ENCODE measurements at regions of chr19 and their contacts with region 1.

Region 1: DNA sequence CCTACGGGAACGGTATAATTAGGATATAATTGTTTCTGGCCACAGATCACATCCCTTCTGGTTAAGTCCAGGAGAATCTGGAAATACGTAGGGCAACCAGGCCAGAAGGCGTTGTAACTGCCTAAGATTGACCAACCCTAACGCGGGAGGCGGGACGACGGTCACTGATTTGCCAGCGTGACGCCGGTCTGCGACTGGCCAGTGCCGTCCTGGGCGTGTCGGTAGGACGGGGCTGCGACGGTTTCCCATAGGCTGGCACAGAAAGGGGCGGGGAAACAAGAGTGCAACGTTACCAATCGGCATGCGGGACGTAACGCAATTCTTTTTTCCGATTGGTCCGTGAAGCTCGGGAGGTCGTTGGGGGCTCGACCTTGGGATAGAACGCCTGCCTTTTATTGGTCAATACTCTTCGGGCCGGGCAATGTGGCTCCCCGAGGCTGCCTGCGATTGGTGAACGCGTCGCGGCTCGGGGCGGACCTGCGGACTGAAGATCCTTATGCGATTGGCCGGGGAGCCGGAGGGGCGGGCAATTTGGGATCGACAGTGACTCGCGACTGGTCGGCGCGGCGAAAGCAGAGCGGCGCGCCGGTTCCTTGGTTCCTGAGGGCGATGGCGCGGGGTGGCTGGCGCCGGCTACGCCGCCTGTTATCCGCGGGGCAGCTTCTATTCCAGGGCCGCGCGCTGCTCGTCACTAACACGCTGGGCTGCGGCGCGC is at the start of gene MPV17L2:
- DNase-seq: peak; percentile 94 to 100 (median 98)
- ATAC-seq: peak; percentile 89
- H3K4me3 Mint-ChIP-seq: peak within 1 kb of the TSS; percentile 78 to 98 (median 90)
- H3K27ac Mint-ChIP-seq: peak within 1 kb of the TSS; percentile 79 to 99 (median 93)
- H3K4me1 Mint-ChIP-seq: peaks cover 7 to 28% (median 24%) of the 10 kb centered on the region in 4 donors
- H3K27me3 Mint-ChIP-seq: peaks cover 0 to 4% (median 0%) of the 10 kb centered on the region in 5 donors
- polyA plus RNA-seq, gene MPV17L2: 5.1 to 12.2 (median 9.4) TPM

Region 2: DNA sequence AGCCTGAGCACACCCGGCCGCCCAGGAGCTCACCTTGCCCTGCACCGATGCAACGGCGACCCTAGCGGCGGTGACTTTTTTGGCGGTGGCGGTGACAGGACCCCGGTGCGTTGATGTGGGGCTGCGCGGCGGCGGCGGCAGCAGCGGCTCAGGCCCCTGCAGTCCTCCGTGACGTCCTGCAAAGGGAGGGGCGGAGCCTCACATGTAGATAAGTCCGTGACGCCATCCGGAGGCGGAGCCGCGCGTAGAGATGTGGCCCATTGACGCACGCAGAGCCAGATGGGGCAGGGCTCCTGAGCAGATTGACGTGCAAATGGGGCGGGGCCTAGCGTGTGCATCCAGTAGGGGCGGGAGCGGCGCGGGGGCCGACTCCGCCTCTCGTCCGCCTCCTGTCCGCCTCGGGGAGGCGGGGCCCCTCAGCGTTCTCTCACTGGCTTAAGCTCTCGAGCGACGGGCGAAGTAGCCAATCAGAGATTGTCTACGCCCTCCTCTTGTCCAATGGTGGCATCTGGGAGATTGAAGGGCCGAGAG is 11.1 kb after region 1 on chr19 and contains the start of gene RAB3A:
- POLR2A ChIA-PET with region 1: interaction called, 72 read pairs
- DNase-seq: peak; percentile 95 to 100 (median 99)
- ATAC-seq: peak; percentile 86 to 87
- H3K4me3 Mint-ChIP-seq: peak within 1 kb of the TSS; percentile 92 to 98 (median 96)
- H3K27ac Mint-ChIP-seq: peak within 1 kb of the TSS; percentile 74 to 99 (median 97)
- H3K4me1 Mint-ChIP-seq: peaks cover 11 to 29% (median 27%) of the 10 kb centered on the region in 4 donors
- H3K27me3 Mint-ChIP-seq: peaks cover 0 to 6% (median 4%) of the 10 kb centered on the region in 5 donors
- polyA plus RNA-seq, gene RAB3A: 1.3 to 2.3 (median 1.8) TPM

Region 3: DNA sequence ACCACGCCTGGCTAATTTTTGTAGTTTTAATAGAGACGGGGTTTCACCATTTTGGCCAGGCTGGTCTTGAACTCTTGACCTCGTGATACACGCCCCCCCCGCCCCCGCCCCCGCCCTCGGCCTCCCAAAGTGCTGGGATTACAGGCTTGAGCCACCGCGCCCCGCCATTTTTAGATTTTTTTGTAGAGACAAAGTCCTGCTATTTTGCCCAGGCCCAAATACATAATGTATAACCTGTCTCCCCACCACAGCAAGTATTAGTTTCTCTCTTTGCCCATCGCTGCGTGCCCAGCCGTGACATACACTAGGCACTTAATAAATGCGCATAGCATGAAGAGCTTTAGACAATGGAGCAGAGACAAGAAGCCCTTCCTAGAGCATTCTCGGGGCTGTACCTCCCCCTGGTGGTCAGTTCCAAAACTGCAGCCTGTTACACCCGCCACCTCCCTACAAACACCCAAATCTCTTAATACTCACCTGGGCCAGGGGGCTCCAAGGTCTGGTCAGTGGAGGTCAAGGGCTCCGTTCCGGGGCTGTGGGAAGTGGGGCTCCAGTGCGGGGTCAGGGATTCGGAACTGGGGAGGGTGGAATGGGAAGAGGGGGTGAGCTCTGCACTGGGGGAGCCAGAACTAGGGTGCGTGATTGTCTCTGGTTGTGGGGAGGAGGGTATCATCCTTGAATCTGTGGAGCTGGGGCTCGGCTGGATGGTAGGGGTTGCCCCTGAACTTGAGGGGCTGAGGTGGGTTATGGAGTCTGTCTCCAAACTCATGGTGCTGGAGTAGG is 58.9 kb after region 1 on chr19:
- POLR2A ChIA-PET with region 1: interaction called, 44 read pairs
- DNase-seq: peak; percentile 65 to 89 (median 80)
- ATAC-seq: peak; percentile 82 to 89
- H3K4me3 Mint-ChIP-seq: peak overlapping the region in 1 of 10 donors; percentile 29
- H3K27ac Mint-ChIP-seq: peak overlapping the region in 1 of 10 donors; percentile 54
- H3K4me1 Mint-ChIP-seq: peaks cover 4 to 20% (median 13%) of the 10 kb centered on the region in 4 donors
- H3K27me3 Mint-ChIP-seq: peaks cover 16 to 43% (median 27%) of the 10 kb centered on the region in 5 donors

Region 4: DNA sequence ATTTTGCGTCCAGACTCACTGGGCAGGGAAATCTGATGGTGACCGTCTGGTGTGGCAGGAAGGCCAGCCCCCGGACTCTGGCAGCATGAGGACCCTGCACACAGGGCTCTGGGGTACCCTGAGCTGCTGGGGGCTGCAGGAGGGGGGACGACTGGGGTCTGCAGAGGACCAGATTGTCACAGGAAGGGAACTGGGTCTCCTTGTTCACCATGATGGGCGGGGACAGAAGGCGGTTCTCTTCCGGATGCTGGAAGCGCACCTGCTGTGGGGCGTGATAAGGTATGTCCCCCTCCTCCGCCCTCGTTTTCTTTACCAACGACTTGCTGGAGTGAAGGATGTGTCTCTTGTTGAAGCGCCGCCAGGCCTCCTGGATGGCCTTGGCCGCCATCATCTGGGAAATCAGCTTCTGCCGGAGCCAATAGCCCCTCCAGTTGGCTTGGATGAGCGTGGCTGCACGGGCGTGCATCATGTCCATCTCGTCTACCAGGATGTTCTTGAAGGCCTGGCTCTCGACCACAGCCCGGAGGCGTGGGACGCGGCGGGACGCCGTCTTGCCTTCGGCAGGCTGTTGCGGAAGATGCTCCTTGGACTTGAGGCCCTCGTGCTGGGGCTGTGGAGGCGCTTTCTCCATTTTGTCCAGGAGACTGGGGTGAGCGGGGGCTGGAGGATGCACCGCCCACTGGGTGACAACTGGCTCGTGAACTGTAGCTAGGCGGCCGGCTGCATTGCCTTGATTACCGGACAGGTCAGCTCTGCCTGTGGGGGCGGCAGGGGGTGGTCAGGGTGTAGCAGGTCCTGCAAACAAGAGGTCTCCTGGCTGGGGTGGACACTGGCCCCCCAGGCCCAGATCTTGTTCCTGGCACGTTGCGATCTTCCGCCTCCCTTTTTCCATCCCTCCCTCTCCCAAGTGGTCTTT is 74.2 kb after region 1 on chr19:
- POLR2A ChIA-PET with region 1: no interaction called
- DNase-seq: peak in 1 of 10 donors; percentile 26
- ATAC-seq: no peak
- H3K4me3 Mint-ChIP-seq: peak overlapping the region in 1 of 10 donors; percentile 22
- H3K27ac Mint-ChIP-seq: no peak overlapping the region
- H3K4me1 Mint-ChIP-seq: peaks cover 2 to 10% (median 5%) of the 10 kb centered on the region in 4 donors
- H3K27me3 Mint-ChIP-seq: no peaks in the 10 kb centered on the region

Region 5: GRCh38 chr19:18297308-18297707 is 104.5 kb after region 1 on chr19:
- POLR2A ChIA-PET with region 1: no interaction called
- DNase-seq: no peak
- ATAC-seq: no peak
- H3K4me3 Mint-ChIP-seq: no peak overlapping the region
- H3K27ac Mint-ChIP-seq: peak overlapping the region in 9 of 10 donors; percentile 8 to 97 (median 76)
- H3K4me1 Mint-ChIP-seq: peaks cover 17 to 49% (median 36%) of the 10 kb centered on the region in 4 donors
- H3K27me3 Mint-ChIP-seq: peaks cover 0 to 1% (median 0%) of the 10 kb centered on the region in 5 donors

Region 6: GRCh38 chr19:18312092-18312534 is 119.3 kb after region 1 on chr19:
- POLR2A ChIA-PET with region 1: no interaction called
- DNase-seq: no peak
- ATAC-seq: no peak
- H3K4me3 Mint-ChIP-seq: no peak overlapping the region
- H3K27ac Mint-ChIP-seq: no peak overlapping the region
- H3K4me1 Mint-ChIP-seq: peaks cover 7 to 45% (median 16%) of the 10 kb centered on the region in 4 donors
- H3K27me3 Mint-ChIP-seq: no peaks in the 10 kb centered on the region

Measured in naive thymus-derived CD8-positive, alpha-beta T cell (primary cell).